Mammary epithelial cell (primary cell): ENCODE measurements at regions of chr11 and their contacts with region 1.

Region 1: GRCh38 chr11:116993599-116993998 is 104.6 kb downstream of the SIK3 start:
- DNase-seq: no peak
- H3K4me3 ChIP-seq: no peak overlapping the region
- H3K27ac ChIP-seq: no peak overlapping the region
- H3K4me1 ChIP-seq: peaks cover 13% of the 10 kb centered on the region
- H3K27me3 ChIP-seq: no peaks in the 10 kb centered on the region
- CTCF ChIP-seq: no peak

Region 2: GRCh38 chr11:116885951-116886655 is 107.5 kb before region 1 on chr11:
- CTCF ChIA-PET with region 1: no interaction called
- dilution Hi-C with region 1: loop called (anchors 5 kb)
- in situ Hi-C with region 1: no loop called
- intact Hi-C with region 1: no loop called
- DNase-seq: no peak
- H3K4me3 ChIP-seq: no peak overlapping the region
- H3K27ac ChIP-seq: no peak overlapping the region
- H3K4me1 ChIP-seq: peaks cover 14% of the 10 kb centered on the region
- H3K27me3 ChIP-seq: no peaks in the 10 kb centered on the region
- CTCF ChIP-seq: no peak

Region 3: DNA sequence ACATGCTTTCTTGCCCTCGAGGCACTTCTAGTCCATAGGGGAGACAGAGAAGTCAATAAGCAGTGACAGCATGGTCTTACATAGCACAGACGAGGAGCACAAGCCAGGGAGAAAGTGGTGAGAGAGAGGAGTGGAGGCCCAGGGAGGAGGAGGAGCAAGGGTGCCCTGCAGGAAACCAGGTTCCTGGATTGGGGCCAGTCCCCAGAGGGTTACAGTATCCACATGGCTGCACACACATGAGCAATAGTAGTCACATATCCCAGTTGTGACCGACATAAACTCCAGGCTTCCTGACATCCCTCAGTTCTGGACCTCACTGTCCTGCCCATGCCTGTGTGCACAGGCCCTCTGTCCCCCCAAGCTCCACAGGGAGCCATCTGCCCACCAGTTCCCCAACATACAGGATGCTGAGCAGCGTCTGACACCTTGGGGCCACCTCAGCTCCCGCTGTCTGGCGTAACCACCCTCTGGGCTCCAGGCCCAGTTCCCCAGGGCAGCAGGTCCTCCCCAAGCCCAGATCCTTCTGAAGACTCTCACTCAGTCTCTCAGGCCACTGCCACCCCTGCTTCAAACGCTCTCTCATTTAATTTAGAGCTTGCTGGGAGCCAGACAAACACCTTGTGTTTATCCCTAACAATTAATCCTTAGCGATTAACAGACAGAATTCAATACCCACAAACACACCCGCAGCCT is 749.7 kb after region 1 on chr11:
- CTCF ChIA-PET with region 1: no interaction called
- dilution Hi-C with region 1: no loop called
- in situ Hi-C with region 1: no loop called
- intact Hi-C with region 1: no loop called
- DNase-seq: no peak
- H3K4me3 ChIP-seq: no peak overlapping the region
- H3K27ac ChIP-seq: no peak overlapping the region
- H3K4me1 ChIP-seq: peaks cover 8% of the 10 kb centered on the region
- H3K27me3 ChIP-seq: peaks cover 3% of the 10 kb centered on the region
- CTCF ChIP-seq: no peak